Transverse colon (tissue), 4 donors: ENCODE measurements at regions of chr14 and their contacts with region 1.

Region 1: DNA sequence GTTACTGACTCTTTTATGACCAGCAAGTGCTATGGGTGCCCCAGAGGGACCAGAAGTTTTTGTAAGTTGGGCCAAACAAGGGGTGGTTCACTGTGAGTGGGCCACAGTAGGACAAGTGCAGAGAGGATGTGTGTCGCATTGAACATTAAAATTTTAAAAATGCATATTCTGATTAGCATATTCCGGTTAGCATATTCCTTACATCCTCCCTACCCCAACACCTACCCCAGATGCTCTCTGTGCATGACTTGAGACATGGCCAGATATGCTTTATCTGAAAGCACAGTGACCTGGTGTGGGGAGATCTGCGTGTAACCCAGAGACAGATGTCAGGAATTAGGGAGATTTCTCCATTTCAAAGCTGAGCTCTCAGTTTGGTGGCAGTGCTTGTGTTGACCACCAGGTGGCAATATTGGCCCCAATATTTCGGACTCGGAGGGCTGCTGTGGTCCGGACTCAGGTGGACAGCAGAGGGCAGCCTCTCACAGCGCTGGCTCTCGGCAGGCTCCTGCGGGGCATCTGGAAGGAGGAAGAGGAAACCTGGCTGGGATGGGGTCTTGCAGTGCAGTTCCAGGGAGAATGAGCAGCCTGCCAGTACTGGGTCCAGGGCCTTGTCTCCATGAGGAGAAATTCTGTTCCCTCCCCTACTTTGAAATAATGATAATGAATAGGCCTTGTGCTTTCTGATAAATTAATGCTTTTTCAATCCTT is 1.6 kb upstream of the CEBPE start:
- DNase-seq: peak; percentile 92
- H3K4me3 ChIP-seq: no peak overlapping the region
- H3K27ac ChIP-seq: peak overlapping the region in 2 of 4 donors; percentile 34 to 45
- H3K4me1 ChIP-seq: peaks cover 0 to 20% (median 5%) of the 10 kb centered on the region in 4 donors
- H3K27me3 ChIP-seq: no peaks in the 10 kb centered on the region
- CTCF ChIP-seq: peak; percentile 99 to 100 (median 100)
- EP300 ChIP-seq: no peak
- POLR2A ChIP-seq: no peak

Region 2: GRCh38 chr14:23034483-23035302 is 86.0 kb before region 1 on chr14 and contains the start of gene PSMB5:
- in situ Hi-C with region 1: no loop called
- intact Hi-C with region 1: no loop called
- DNase-seq: peak; percentile 91
- H3K4me3 ChIP-seq: peak within 1 kb of the TSS; percentile 59 to 99 (median 84)
- H3K27ac ChIP-seq: peak within 1 kb of the TSS; percentile 91 to 96 (median 92)
- H3K4me1 ChIP-seq: peaks cover 8 to 16% (median 11%) of the 10 kb centered on the region in 4 donors
- H3K27me3 ChIP-seq: no peaks in the 10 kb centered on the region
- CTCF ChIP-seq: peak in 2 of 5 experiments; percentile 33 to 46
- EP300 ChIP-seq: no peak
- POLR2A ChIP-seq: peak; percentile 41
- total RNA-seq, gene PSMB5: 8.6 to 85.1 (median 42.5) TPM

Region 3: GRCh38 chr14:23186913-23187654 is 66.4 kb after region 1 on chr14:
- in situ Hi-C with region 1: loop called (anchors 5 kb)
- intact Hi-C with region 1: loop called (anchors 2 kb)
- DNase-seq: peak; percentile 48
- H3K4me3 ChIP-seq: no peak overlapping the region
- H3K27ac ChIP-seq: no peak overlapping the region
- H3K4me1 ChIP-seq: peaks cover 0 to 14% (median 4%) of the 10 kb centered on the region in 4 donors
- H3K27me3 ChIP-seq: no peaks in the 10 kb centered on the region
- CTCF ChIP-seq: peak; percentile 76 to 94 (median 78)
- EP300 ChIP-seq: no peak
- POLR2A ChIP-seq: no peak

Region 4: DNA sequence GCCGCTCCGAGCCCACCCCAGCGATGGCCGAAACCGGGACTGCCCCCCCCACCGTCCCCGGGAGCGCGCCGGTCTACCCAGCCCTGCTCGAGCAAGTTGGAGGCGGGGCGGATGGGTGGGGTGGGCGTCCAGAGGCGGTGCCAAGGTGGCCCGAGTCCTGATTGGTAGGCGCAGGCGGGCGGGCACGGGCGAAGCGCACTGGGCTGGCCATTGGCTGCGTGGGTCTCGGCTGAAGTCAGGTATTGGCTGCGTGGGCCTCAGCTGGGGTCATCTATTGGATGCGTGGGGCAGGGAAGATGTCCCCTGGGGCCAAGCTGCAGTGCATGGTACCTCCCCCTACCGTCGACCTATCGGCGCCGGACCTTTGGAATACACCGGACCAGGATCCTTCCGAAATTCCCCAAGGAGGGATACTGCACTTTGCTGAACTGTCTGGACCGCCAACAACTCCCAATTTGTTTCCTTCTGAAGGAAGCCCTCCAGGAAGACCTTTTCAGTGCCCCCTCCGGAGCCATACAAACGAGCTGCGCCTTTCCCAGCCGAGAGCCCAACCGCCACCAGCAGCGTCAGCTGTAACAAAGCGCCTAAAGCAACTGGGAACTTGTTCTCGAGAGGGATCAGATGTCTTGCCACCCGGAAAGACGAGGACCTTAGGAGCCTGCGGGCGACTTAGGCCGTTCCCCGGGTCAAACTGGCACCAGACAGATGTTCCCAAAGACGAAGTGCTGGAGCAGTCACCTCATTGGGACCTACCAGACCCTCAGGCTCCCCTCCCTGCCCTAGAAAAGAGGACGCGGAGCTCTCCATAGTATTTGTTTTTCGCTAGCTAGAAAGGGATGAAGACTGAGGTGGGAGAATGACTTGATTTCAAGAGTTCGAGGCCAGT is 165.6 kb after region 1 on chr14 and contains the start of gene HOMEZ:
- in situ Hi-C with region 1: loop called in 3 of 4 experiments (anchors 25 kb)
- intact Hi-C with region 1: no loop called
- DNase-seq: peak; percentile 99
- H3K4me3 ChIP-seq: peak within 1 kb of the TSS; percentile 70 to 96 (median 82)
- H3K27ac ChIP-seq: peak within 1 kb of the TSS; percentile 91 to 98 (median 95)
- H3K4me1 ChIP-seq: peaks cover 5 to 22% (median 15%) of the 10 kb centered on the region in 4 donors
- H3K27me3 ChIP-seq: no peaks in the 10 kb centered on the region
- CTCF ChIP-seq: peak in 1 of 5 experiments; percentile 13
- EP300 ChIP-seq: no peak
- POLR2A ChIP-seq: peak; percentile 85
- total RNA-seq, gene HOMEZ: 1.9 to 12.9 (median 8.6) TPM